Naive thymus-derived CD4-positive, alpha-beta T cell (primary cell): ENCODE measurements at regions of chr22 and their contacts with region 1.

Region 1: DNA sequence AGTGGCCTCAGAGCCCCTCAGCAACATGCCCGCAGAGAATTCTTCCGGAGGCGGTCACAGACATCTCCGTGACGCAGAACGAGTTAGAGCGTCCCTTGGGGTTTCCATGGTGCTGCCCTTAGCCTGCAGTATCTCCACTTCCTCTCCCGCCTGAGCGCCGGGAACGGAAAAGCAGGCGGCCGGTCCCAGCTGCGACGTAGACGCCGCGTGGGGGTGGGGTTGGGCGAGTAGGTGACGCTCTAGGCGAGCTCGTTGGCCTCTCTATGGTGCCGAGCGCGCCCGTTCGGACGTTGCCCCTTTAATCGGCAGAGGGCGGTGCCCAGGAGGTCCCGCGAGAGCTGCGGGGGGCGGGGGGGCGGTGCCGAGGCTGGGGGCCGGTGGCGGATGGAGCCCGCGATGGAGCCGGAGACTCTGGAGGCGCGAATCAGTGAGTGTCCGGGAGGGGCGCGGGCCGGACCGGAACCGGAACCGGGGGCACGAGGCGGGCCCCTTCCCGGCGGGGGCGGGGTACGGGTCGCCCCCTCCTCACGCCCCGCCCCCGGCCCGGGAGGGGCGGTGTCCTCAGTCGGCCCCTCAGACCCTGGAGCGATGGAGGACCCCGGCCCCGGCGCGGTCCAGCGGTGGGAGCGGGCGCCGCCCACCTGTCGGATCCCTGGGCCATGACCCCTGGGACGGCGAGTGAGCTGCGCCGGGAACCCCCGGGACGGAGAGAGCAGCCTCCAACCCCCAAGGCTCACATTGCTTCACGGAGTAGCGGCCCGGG is at the start of gene GGA1:
- DNase-seq: peak; percentile 92 to 99 (median 97)
- ATAC-seq: peak; percentile 89
- H3K4me3 ChIP-seq: peak within 1 kb of the TSS; percentile 81
- H3K4me3 Mint-ChIP-seq: peak within 1 kb of the TSS; percentile 88 to 97 (median 93)
- H3K27ac ChIP-seq: peak within 1 kb of the TSS; percentile 85
- H3K27ac Mint-ChIP-seq: peak within 1 kb of the TSS; percentile 93 to 99 (median 97)
- H3K4me1 ChIP-seq: peaks cover 46 to 47% of the 10 kb centered on the region in 2 donors
- H3K4me1 Mint-ChIP-seq: peaks cover 36 to 72% (median 57%) of the 10 kb centered on the region in 7 donors
- H3K27me3 ChIP-seq: no peaks in the 10 kb centered on the region
- H3K27me3 Mint-ChIP-seq: peaks cover 0 to 6% (median 0%) of the 10 kb centered on the region in 5 donors
- total RNA-seq, gene GGA1: 64.2 to 124 (median 102) TPM

Region 2: DNA sequence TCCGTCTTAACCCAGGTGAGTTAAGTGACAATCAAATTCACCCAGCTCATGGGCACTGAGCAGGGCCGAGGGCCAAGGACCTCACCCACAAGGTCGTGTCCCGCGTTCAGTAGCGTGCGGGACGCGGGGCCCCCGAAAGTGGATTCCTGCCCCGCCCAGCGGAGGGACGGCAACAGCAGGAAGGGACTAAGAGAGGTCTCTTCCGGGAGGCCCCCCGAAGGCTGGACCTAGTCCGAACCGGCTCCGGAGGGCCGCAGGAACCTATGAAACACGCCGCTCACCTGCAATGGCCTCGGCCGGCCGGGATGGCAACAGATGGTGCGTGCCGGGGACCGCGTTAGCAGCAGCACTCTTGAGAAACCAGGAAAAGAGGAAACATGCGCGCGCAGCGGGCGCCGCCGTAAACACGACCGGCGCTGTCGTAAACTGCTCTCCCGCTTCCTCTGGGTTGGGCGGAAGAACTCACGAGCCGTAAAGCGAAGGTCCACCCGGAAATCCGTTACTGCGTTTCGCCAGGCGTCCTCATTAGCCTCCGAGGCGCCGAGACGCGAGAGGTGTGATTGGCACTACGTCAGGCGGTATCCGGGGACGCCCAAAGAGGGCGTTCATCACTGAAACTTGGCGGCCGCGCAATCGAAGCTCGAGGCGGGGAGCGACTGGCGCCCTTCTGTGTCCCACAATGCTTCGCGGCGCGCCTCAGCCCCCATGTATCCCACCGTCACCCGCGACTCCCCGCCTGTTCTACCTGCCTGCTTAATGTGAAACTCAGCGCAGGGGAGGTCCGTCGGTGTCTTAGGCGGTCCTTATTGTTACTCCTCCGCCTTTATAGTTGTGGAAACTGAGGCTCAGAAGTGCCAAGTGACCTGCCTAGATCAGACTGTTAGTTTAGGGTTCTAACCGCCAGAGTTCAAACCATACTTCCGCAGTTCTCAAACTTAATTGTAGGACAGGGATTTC is 1079.6 kb before region 1 on chr22 and contains the start of gene EIF3D:
- CTCF ChIA-PET with region 1: no interaction called
- POLR2A ChIA-PET with region 1: no interaction called
- intact Hi-C with region 1: loop called in 1 of 2 experiments (anchors 5 kb)
- DNase-seq: peak; percentile 93 to 100 (median 99)
- ATAC-seq: peak; percentile 94
- H3K4me3 ChIP-seq: peak within 1 kb of the TSS; percentile 84
- H3K4me3 Mint-ChIP-seq: peak within 1 kb of the TSS; percentile 78 to 98 (median 96)
- H3K27ac ChIP-seq: peak within 1 kb of the TSS; percentile 92
- H3K27ac Mint-ChIP-seq: peak within 1 kb of the TSS; percentile 94 to 99 (median 98)
- H3K4me1 ChIP-seq: peaks cover 4 to 12% of the 10 kb centered on the region in 2 donors
- H3K4me1 Mint-ChIP-seq: peaks cover 11 to 23% (median 21%) of the 10 kb centered on the region in 7 donors
- H3K27me3 ChIP-seq: no peaks in the 10 kb centered on the region
- H3K27me3 Mint-ChIP-seq: peaks cover 0 to 4% (median 0%) of the 10 kb centered on the region in 5 donors
- total RNA-seq, gene EIF3D: 220 to 257 (median 232) TPM

Region 3: DNA sequence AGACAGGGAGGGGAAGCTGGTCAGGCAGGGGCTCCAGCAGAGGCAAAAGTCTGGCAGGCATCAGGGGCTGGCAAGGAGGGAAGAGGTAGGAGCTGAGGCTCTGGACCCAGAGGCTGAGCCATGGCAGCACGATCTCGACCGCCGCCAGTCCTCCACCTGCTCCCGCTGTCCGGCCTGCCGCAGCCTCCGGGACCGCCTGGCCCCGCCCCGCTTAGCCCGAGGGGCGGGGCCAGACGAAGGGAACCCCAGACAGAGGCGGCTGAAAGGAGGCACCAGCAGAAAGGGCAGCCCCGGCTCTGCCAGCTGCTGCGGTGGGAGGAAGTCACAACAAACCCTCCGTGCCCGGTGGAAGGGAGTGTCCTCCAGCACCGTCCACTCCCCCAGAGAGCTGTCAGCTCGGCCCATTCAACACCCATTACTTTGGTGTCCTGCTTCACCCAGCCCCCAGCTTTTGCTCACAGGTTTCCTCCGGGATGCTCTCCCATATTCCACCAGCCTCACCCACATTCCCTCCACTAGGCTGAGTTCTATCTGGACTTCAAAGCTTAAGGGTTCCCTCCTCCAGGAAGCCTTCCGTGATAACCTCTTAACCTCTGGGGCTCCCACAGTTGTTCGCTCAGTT is 122.3 kb before region 1 on chr22 and contains the start of gene MFNG:
- CTCF ChIA-PET with region 1: interaction called, 9 read pairs
- POLR2A ChIA-PET with region 1: interaction called, 47 read pairs
- intact Hi-C with region 1: loop called (anchors 1 kb)
- DNase-seq: peak; percentile 57 to 82 (median 61)
- ATAC-seq: peak; percentile 81
- H3K4me3 ChIP-seq: peak within 1 kb of the TSS; percentile 84
- H3K4me3 Mint-ChIP-seq: peak within 1 kb of the TSS; percentile 91 to 99 (median 96)
- H3K27ac ChIP-seq: peak within 1 kb of the TSS; percentile 86
- H3K27ac Mint-ChIP-seq: peak within 1 kb of the TSS; percentile 94 to 99 (median 98)
- H3K4me1 ChIP-seq: peaks cover 25 to 57% of the 10 kb centered on the region in 2 donors
- H3K4me1 Mint-ChIP-seq: peaks cover 53 to 79% (median 68%) of the 10 kb centered on the region in 7 donors
- H3K27me3 ChIP-seq: no peaks in the 10 kb centered on the region
- H3K27me3 Mint-ChIP-seq: no peaks in the 10 kb centered on the region
- total RNA-seq, gene MFNG: 146 to 223 (median 203) TPM

Region 4: DNA sequence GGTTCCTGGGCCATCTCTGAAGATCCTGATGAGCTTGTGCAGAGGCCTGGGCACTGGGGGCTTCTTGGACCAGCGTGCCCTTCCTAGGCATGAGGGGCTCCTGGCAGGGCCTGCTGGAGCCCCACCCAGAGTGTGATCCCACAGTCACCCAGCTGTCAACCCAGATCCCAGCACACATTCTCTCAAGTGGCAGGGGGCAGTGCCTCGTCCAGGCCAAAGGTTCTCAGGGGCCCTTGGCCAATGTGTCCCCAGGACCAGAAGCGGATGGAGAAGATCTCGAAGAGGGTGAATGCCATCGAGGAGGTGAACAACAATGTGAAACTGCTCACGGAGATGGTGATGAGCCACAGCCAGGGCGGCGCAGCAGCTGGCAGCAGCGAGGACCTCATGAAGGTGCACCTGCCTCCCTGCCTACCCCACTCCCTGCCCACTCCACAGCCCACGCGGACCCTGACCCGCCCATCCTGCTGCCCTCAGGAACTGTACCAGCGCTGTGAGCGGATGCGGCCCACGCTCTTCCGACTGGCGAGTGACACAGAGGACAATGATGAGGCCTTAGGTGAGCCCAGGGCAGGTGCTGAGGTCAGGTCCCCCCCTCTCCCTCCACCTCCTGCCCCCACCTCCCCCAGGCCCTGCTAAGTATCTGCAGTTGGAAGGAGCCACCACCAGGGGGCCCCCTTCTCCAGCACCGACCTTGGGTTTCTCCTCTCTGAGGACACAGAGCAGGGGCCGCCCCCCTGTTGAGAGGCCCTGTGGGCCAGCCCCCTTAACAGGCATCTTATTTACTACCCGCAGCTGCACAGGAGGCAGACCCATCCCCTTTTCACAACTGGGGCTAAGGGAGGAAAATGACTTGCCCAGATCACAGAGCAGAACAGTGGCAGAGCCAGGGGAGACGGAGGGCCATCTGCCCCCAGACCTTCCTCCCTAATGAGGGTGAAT is 14.7 kb after region 1 on chr22:
- CTCF ChIA-PET with region 1: interaction called, 15 read pairs
- POLR2A ChIA-PET with region 1: interaction called, 20 read pairs
- intact Hi-C with region 1: loop called in 1 of 2 experiments (anchors 1 kb)
- DNase-seq: peak; percentile 63 to 84 (median 75)
- ATAC-seq: peak; percentile 91
- H3K4me3 ChIP-seq: no peak overlapping the region
- H3K4me3 Mint-ChIP-seq: peak overlapping the region in 9 of 10 donors; percentile 49 to 75 (median 60)
- H3K27ac ChIP-seq: peak overlapping the region; percentile 60
- H3K27ac Mint-ChIP-seq: peak overlapping the region; percentile 87 to 99 (median 94)
- H3K4me1 ChIP-seq: peaks cover 45 to 52% of the 10 kb centered on the region in 2 donors
- H3K4me1 Mint-ChIP-seq: peaks cover 28 to 53% (median 37%) of the 10 kb centered on the region in 7 donors
- H3K27me3 ChIP-seq: no peaks in the 10 kb centered on the region
- H3K27me3 Mint-ChIP-seq: no peaks in the 10 kb centered on the region

Region 5: DNA sequence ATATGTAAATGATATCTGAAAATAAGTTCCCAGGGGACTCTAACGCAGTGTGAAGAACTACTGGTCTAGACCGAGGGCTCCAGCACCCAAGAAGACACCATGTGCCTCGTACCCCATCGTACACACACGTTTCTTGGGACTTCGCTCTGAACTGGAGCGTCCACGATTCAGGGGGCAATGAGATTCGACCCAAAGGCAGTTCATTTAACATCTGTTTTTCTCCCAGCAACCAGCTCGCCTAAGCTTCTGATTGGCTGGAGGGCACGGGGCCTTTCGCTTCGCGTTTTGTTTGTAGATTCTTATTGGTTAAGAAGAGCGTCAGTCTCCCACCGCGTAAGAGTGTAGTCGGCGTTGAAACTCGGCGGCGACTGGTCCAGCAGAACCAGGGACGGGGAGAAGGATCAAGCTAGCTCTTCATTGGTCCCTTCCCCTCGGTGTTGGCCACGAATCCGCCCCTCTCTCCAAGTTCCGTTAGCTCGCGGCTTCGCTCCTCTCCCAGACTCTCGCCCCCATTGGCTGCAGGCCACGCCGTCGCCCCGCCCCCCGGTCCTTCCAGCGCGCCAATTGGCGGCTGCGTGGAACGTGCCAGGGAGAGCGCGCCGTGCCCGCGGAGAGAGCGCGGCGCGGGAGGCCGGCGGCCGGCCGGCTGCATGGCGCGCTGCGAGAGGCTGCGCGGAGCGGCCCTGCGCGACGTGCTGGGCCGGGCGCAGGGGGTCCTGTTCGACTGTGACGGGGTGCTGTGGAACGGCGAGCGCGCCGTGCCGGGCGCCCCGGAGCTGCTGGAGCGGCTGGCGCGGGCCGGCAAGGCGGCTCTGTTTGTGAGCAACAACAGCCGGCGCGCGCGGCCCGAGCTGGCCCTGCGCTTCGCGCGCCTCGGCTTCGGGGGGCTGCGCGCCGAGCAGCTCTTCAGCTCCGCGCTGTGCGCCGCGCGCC is 49.7 kb after region 1 on chr22 and contains the start of gene PDXP:
- CTCF ChIA-PET with region 1: interaction called, 3 read pairs
- POLR2A ChIA-PET with region 1: interaction called, 40 read pairs
- intact Hi-C with region 1: loop called in 1 of 2 experiments (anchors 1 kb)
- DNase-seq: peak; percentile 95 to 99 (median 98)
- ATAC-seq: peak; percentile 96
- H3K4me3 ChIP-seq: peak within 1 kb of the TSS; percentile 60
- H3K4me3 Mint-ChIP-seq: peak within 1 kb of the TSS; percentile 85 to 95 (median 89)
- H3K27ac ChIP-seq: peak within 1 kb of the TSS; percentile 75
- H3K27ac Mint-ChIP-seq: peak within 1 kb of the TSS; percentile 82 to 98 (median 91)
- H3K4me1 ChIP-seq: peaks cover 23 to 26% of the 10 kb centered on the region in 2 donors
- H3K4me1 Mint-ChIP-seq: peaks cover 27 to 45% (median 41%) of the 10 kb centered on the region in 7 donors
- H3K27me3 ChIP-seq: no peaks in the 10 kb centered on the region
- H3K27me3 Mint-ChIP-seq: no peaks in the 10 kb centered on the region
- total RNA-seq, gene PDXP: 3.9 to 27.4 (median 7.5) TPM

Region 6: DNA sequence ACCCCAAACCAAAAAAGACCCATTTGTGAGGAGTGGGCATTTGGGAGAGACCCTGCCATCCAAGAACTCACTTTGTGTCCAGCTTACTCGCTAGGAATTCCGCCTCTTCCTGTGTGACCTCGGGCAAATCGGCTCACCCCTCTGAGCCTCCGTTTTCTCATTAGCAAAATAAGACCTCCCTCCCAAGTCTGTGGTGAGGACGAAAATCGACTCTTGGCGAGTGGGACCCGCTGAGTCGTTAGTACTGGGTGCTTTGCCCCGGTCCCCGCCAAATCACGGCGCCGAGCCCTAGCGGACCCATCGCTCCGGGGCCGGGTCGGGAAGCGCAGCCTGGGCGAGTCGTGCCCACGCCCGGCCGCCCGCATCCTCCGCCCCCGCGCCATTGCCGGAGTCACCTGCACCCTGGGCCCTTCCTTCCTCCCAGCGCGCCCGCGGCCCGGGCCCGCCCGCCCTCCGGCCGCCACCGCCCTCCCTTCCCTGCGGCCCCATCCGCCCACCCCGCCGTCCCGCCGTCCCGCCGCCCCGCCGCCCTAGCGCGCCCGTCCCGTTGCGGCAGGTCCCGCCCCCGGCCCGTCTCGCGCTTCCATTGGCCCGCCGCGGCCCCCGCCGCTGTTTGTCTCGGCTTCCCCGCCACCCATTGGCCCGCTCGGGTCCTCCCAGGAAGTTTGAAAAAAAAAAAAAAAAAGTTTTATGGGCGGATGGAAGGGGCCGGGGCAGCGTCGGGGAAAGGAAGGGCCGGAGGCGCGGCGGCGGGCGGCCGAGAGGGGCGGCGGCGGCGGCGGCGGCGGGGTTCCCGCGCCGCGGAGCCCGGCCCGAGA is 137.1 kb after region 1 on chr22:
- CTCF ChIA-PET with region 1: no interaction called
- POLR2A ChIA-PET with region 1: no interaction called
- intact Hi-C with region 1: loop called (anchors 5 kb)
- DNase-seq: peak; percentile 67 to 90 (median 78)
- ATAC-seq: peak; percentile 97
- H3K4me3 ChIP-seq: peak overlapping the region; percentile 74
- H3K4me3 Mint-ChIP-seq: peak overlapping the region; percentile 82 to 96 (median 92)
- H3K27ac ChIP-seq: peak overlapping the region; percentile 77
- H3K27ac Mint-ChIP-seq: peak overlapping the region; percentile 75 to 93 (median 87)
- H3K4me1 ChIP-seq: peaks cover 9 to 18% of the 10 kb centered on the region in 2 donors
- H3K4me1 Mint-ChIP-seq: peaks cover 13 to 36% (median 26%) of the 10 kb centered on the region in 7 donors
- H3K27me3 ChIP-seq: no peaks in the 10 kb centered on the region
- H3K27me3 Mint-ChIP-seq: no peaks in the 10 kb centered on the region

Region 7: DNA sequence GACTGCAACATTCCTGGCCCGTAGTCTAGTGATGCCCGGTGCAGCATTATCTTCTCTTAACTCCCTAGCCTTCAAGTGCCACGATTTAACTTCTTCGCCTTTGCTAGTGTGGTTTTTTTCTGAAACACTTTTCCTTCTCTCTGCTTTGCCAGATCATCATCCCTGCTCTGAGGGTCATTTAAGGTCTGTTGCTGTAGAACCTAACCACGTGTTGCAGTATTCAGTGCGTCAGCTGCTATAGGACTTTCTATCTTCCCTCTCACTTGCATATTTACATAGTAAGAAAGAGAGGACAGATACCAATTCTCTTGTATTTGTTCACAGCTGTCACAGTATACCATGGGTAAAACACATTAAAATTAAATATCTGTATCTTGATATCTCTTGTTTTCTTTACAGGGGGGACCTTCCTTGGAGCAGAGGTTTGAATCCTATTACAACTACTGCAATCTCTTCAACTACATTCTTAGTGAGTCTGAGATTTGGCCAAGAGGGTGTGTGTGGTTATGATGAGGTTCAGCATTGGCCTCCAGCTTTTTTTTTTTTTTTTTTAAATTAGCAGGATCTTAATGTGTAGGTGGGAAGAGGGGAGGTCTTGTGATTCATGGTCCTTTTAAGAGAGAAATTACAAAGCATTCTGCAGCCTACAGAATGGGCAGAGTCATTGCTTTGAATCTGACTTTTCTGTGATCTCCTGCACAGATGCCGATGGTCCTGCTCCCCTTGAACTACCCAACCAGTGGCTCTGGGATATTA is 254.1 kb after region 1 on chr22:
- CTCF ChIA-PET with region 1: interaction called, 7 read pairs
- POLR2A ChIA-PET with region 1: no interaction called
- intact Hi-C with region 1: loop called in 1 of 2 experiments (anchors 1 kb)
- DNase-seq: no peak
- ATAC-seq: no peak
- H3K4me3 ChIP-seq: no peak overlapping the region
- H3K4me3 Mint-ChIP-seq: no peak overlapping the region
- H3K27ac ChIP-seq: no peak overlapping the region
- H3K27ac Mint-ChIP-seq: peak overlapping the region in 3 of 9 donors; percentile 13 to 82 (median 76)
- H3K4me1 ChIP-seq: peaks cover 0 to 2% of the 10 kb centered on the region in 2 donors
- H3K4me1 Mint-ChIP-seq: peaks cover 5 to 10% (median 6%) of the 10 kb centered on the region in 7 donors
- H3K27me3 ChIP-seq: no peaks in the 10 kb centered on the region
- H3K27me3 Mint-ChIP-seq: no peaks in the 10 kb centered on the region